PC-3 (cell line): ENCODE measurements at regions of chr22 and their contacts with region 1.

Region 1: DNA sequence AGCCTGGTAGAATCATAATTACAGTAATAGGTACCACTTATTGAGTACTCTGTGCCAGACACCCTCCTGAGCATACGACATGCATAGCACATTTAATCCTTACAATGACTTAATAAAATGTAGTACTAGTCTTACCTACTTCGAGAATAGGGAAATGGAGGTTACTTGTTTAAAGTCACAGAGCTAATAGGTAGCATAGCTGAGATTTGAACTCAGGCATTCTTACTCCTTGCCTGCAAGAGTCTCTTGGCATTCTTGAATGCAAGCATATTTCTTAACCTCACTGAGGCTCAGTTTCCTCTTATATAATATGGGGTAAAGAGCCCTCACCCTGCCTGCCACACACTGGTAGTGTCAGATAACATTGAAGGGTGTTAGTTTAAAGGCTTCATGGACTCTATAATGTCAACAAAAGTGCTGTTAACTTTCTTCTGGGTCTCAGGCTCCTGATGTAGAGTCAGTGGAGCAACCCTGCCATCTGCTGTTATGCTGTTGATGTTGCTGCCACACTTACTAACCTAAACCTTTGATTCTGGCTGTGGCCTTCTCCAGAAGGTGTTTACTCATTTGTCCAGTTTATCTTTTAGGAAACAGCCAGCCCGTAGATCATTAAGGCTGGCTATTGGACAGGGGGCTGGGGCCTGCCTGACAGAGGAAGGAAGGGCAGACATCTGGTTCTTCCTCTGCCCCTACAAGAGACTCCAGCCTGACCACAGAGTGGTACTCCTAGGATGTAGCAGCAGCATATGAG is 18.9 kb downstream of the LIMK2 start:
- DNase-seq: peak; percentile 42
- ATAC-seq: peak; percentile 87
- H3K4me3 ChIP-seq: no peak overlapping the region
- H3K27ac ChIP-seq: no peak overlapping the region
- H3K4me1 ChIP-seq: peaks cover 5% of the 10 kb centered on the region; the same call in 1 of the 2 replicates
- H3K27me3 ChIP-seq: no peaks in the 10 kb centered on the region
- CTCF ChIP-seq: peak; percentile 62

Region 2: GRCh38 chr22:30947816-30948454 is 283.1 kb before region 1 on chr22:
- CTCF ChIA-PET with region 1: no interaction called
- POLR2A ChIA-PET with region 1: no interaction called
- intact Hi-C with region 1: loop called (anchors 10 kb)
- DNase-seq: peak; percentile 47
- ATAC-seq: no peak
- H3K4me3 ChIP-seq: no peak overlapping the region
- H3K27ac ChIP-seq: no peak overlapping the region
- H3K4me1 ChIP-seq: no peaks in the 10 kb centered on the region
- H3K27me3 ChIP-seq: no peaks in the 10 kb centered on the region
- CTCF ChIP-seq: peak; percentile 69

Region 3: GRCh38 chr22:31107178-31107893 is 123.7 kb before region 1 on chr22 and contains the start of gene SELENOM:
- CTCF ChIA-PET with region 1: no interaction called
- POLR2A ChIA-PET with region 1: no interaction called
- intact Hi-C with region 1: loop called (anchors 1 kb)
- DNase-seq: peak; percentile 97
- ATAC-seq: peak; percentile 98
- H3K4me3 ChIP-seq: peak within 1 kb of the TSS; percentile 74
- H3K27ac ChIP-seq: no peak within 1 kb of the TSS
- H3K4me1 ChIP-seq: peaks cover 4% of the 10 kb centered on the region; the same call in 1 of the 2 replicates
- H3K27me3 ChIP-seq: no peaks in the 10 kb centered on the region
- CTCF ChIP-seq: peak; percentile 88
- total RNA-seq, gene SELENOM: 36.8 and 56.7 TPM in 2 replicates

Region 4: GRCh38 chr22:31160328-31160978 is 70.6 kb before region 1 on chr22:
- CTCF ChIA-PET with region 1: no interaction called
- POLR2A ChIA-PET with region 1: no interaction called
- intact Hi-C with region 1: loop called (anchors 5 kb)
- DNase-seq: no peak
- ATAC-seq: peak; percentile 62
- H3K4me3 ChIP-seq: peak overlapping the region; percentile 82
- H3K27ac ChIP-seq: no peak overlapping the region
- H3K4me1 ChIP-seq: peaks cover 7% of the 10 kb centered on the region; the same call in 1 of the 2 replicates
- H3K27me3 ChIP-seq: no peaks in the 10 kb centered on the region
- CTCF ChIP-seq: no peak

Region 5: DNA sequence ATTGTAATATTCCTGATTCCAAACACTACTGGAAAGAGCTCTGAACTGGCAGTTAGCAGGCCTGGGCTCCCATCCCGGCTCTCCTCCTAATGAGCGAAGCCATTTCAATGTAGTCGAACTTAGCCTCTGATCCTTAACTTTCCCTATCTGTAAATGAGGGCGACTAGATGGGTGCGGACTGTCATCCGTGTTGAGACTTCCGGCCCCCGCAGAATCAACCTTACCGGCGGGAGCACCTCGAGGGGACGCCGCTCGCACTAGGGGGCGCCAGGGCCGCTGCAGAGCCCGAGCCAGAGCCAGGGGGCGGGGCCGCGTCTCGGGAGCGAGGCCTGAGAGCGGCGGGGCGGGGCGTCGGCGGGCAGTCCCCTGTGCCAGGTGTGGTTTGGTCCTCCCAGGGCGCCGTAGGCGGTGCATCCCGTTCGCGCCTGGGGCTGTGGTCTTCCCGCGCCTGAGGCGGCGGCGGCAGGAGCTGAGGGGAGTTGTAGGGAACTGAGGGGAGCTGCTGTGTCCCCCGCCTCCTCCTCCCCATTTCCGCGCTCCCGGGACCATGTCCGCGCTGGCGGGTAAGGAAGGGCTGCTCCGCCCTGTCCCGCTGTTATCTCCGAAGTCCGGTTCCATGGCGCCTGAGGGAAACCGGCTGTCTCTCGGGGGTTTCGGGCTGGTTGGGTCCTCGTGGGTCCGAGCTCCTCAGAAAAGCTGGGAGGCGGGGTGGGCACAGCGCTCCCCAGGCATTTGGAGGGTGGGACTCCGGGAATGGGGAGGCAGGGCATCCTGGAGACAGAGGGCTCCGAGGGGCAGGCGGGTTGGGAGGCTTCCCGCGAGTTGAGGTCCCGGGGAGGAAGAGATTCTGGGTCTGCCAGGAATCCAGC is 18.9 kb before region 1 on chr22 and contains the start of gene LIMK2:
- CTCF ChIA-PET with region 1: interaction called, 4 read pairs
- POLR2A ChIA-PET with region 1: no interaction called
- intact Hi-C with region 1: loop called (anchors 1 kb)
- DNase-seq: peak; percentile 83
- ATAC-seq: peak; percentile 85
- H3K4me3 ChIP-seq: peak within 1 kb of the TSS; percentile 89
- H3K27ac ChIP-seq: no peak within 1 kb of the TSS
- H3K4me1 ChIP-seq: peaks cover 13% of the 10 kb centered on the region
- H3K27me3 ChIP-seq: no peaks in the 10 kb centered on the region
- CTCF ChIP-seq: peak; percentile 78
- total RNA-seq, gene LIMK2: 13.2 and 17.2 TPM in 2 replicates